Right ventricle myocardium inferior (tissue), 1 donor: ENCODE measurements at regions of chr1 and their contacts with region 1.

Region 1: GRCh38 chr1:61588736-61589672 is 135.9 kb downstream of the TM2D1 start:
- DNase-seq: peak; percentile 66
- ATAC-seq: peak; percentile 62

Region 2: GRCh38 chr1:60978421-60979357 is 610.3 kb before region 1 on chr1:
- intact Hi-C with region 1: loop called (anchors 2 kb)
- DNase-seq: no peak
- ATAC-seq: peak; percentile 47

Region 3: DNA sequence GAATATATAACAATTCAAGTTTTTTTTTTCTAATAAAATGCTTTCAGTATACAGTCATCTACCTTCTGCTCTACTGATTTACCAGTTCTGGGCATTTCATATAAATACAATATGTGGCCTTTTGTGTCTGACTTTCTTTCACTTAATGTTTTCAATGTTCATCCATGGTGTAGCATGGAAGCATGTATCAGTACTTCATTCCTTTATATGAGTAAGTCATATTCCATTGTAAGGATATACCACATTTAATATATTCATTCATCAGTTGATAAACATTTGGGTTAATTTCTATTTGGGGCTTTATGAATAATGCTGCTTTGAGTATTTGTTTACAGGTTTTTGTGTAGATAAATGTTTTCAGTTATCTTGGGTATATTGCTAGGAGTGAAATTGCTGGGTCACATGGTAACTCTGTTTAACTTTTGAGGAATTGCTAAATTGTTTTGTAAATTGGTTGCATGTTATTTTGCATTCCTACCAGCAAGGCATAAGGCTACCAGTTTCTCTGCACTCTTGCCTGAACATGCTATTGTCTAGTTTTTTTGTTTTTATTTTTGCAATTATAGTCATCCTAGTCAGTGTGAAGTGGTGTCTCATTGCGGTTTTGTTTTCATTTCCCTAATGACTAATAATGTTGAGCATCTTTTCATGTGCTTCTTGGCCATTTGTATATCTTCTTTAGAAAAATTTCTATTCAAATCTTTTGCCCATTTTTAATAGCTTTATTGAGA is 70.2 kb before region 1 on chr1:
- intact Hi-C with region 1: no loop called
- DNase-seq: no peak
- ATAC-seq: no peak